Activated T-helper 1 cell treated with anti-CD3 and anti-CD28 coated beads, Interleukin-12 subunit alpha, Interleukin-12 subunit beta, Interleukin-2, Interleukin-4 antibody, amounts not matched to agents 30 ng/mL and 10 ng/mL and 1 ng/mL, durations not matched to agents 14 hours and 24 hours and 36 hours (primary cell): ENCODE measurements at regions of chr11 and their contacts with region 1.

Region 1: GRCh38 chr11:67658691-67659271 is 8.3 kb upstream of the ACY3 start:
- DNase-seq: no peak
- H3K4me3 Mint-ChIP-seq: no peak overlapping the region
- H3K27ac Mint-ChIP-seq: no peak overlapping the region
- H3K4me1 Mint-ChIP-seq: peaks cover 4% of the 10 kb centered on the region
- H3K27me3 Mint-ChIP-seq: peaks cover 6% of the 10 kb centered on the region

Region 2: DNA sequence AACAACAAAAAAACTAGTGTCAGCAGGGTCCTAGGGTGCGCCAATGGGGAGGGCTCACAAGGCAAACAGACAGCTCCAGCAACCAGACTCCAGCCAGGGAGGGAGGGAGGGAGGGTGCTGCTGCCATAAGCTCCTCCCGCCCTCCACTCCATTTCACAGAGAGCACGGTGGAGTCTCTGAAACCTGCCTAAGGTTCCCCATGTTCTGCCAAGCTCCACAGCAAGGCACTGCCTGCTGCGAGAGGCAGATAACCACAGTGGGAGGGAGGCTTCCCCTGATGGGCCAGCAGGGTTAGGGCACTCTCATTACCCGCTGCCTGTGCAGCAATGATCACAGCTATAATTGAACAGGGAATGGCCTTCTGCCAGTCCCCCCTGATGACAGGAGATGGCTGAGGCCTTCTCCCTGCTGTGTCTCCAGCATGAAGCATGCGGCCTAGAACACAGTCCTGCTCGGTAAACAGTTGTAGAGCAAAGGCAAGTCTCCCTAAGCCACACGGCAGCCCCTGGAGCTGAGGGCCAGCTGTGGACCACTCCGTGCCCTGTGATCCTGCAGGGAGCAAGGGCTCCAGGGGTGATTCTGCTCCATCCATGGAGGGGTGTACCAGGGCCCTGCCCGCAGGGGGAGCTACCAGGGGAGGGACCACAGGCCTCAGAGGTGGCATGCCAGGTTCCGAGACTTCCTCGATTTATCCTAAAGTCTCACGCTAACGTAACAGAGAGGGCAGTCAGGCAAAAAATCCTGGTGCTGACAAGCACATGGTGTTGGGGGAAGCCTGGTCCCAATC is 743.5 kb before region 1 on chr11:
- intact Hi-C with region 1: no loop called
- DNase-seq: no peak
- H3K4me3 Mint-ChIP-seq: no peak overlapping the region
- H3K27ac Mint-ChIP-seq: no peak overlapping the region
- H3K4me1 Mint-ChIP-seq: no peaks in the 10 kb centered on the region
- H3K27me3 Mint-ChIP-seq: peaks cover 2% of the 10 kb centered on the region

Region 3: GRCh38 chr11:67640021-67640757 is 18.6 kb before region 1 on chr11:
- intact Hi-C with region 1: loop called (anchors 1 kb)
- DNase-seq: peak; percentile 28
- H3K4me3 Mint-ChIP-seq: no peak overlapping the region
- H3K27ac Mint-ChIP-seq: no peak overlapping the region
- H3K4me1 Mint-ChIP-seq: peaks cover 7% of the 10 kb centered on the region
- H3K27me3 Mint-ChIP-seq: peaks cover 4% of the 10 kb centered on the region